GM12878 (cell line): ENCODE measurements at regions of chr20 and their contacts with region 1.

Region 1: DNA sequence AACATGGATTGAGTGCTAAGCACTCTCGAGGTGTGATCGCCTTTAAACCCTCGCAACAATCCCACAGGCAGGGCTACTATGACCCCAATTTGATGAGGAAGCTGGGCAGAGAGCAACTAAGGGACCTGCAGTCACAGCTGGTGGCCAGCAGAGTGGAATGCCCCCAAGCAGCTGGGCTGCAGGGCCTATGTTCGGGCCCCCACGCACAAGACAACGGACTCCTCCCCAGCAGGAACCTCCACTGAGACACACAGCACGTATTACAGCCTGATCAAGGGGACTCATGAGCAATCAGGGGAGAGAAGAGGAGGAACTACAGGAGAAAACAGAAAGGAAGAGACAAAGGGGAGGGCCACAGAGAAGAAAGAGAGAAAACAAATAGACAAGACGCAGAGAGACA is 21.7 kb downstream of the CST7 start:
- DNase-seq: no peak
- ATAC-seq: no peak
- H3K4me3 ChIP-seq: no peak overlapping the region
- H3K27ac ChIP-seq: no peak overlapping the region
- H3K4me1 ChIP-seq: no peaks in the 10 kb centered on the region
- H3K27me3 ChIP-seq: no peaks in the 10 kb centered on the region
- CTCF ChIP-seq: no peak
- EP300 ChIP-seq: no peak
- POLR2A ChIP-seq: no peak
- RAD21 ChIP-seq: no peak

Region 2: DNA sequence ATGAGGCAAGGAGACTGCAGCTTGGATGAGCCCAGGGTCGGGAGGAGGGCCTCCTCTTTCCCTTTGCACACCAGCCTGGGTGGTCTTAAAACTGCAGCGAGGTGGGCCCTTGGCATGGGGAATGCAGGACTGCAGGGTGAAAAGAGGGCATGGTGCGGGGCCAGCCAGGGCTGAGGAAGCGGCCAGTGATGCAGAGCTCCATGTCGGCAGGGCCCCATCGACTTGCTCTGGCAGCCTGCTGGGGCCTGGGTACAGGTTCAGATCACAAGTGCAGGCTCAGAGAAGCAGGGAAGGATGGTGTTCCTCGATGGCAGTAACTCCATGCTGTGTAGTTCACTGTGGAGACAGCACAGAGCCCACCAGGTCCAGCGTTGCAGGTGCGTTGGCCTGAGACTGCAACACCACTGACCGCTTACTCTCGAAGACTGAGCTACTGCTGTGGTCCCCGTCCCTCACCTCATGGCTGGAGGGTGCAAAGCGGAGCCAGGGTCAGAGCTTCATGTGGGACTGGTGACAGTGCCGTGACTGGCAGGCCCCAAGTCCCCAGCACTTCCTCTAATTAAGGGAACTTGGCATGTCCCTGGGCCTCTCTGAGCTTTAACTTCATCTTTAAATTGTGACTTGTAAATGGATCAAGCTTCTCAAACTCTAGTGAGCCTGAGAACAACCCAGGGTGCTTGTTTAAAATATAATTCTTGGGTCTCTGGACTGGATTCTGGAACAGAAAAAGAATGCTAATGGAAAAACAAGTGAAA is 278.1 kb before region 1 on chr20:
- CTCF ChIA-PET with region 1: no interaction called
- POLR2A ChIA-PET with region 1: no interaction called
- RAD21 ChIA-PET with region 1: no interaction called
- SMC1A ChIA-PET with region 1: no interaction called
- in situ Hi-C with region 1: no loop called
- intact Hi-C with region 1: no loop called
- DNase-seq: no peak
- ATAC-seq: no peak
- H3K4me3 ChIP-seq: no peak overlapping the region
- H3K27ac ChIP-seq: no peak overlapping the region
- H3K4me1 ChIP-seq: no peaks in the 10 kb centered on the region
- H3K27me3 ChIP-seq: peaks cover 0 to 2% of the 10 kb centered on the region in 2 experiments; a peak in 2 of 4 replicates
- CTCF ChIP-seq: no peak
- EP300 ChIP-seq: no peak
- POLR2A ChIP-seq: no peak
- RAD21 ChIP-seq: no peak

Region 3: GRCh38 chr20:24842918-24843715 is 127.6 kb before region 1 on chr20:
- CTCF ChIA-PET with region 1: no interaction called
- POLR2A ChIA-PET with region 1: no interaction called
- RAD21 ChIA-PET with region 1: no interaction called
- SMC1A ChIA-PET with region 1: no interaction called
- in situ Hi-C with region 1: no loop called
- intact Hi-C with region 1: no loop called
- DNase-seq: peak; percentile 98
- ATAC-seq: peak; percentile 95
- H3K4me3 ChIP-seq: peak overlapping the region; percentile 12
- H3K27ac ChIP-seq: peak overlapping the region; percentile 63
- H3K4me1 ChIP-seq: peaks cover 49% of the 10 kb centered on the region
- H3K27me3 ChIP-seq: no peaks in the 10 kb centered on the region
- CTCF ChIP-seq: no peak
- EP300 ChIP-seq: peak; percentile 86 to 92
- POLR2A ChIP-seq: no peak
- RAD21 ChIP-seq: no peak

Region 4: GRCh38 chr20:25022687-25023086 is 51.9 kb after region 1 on chr20:
- CTCF ChIA-PET with region 1: no interaction called
- POLR2A ChIA-PET with region 1: no interaction called
- RAD21 ChIA-PET with region 1: no interaction called
- SMC1A ChIA-PET with region 1: no interaction called
- in situ Hi-C with region 1: loop called (anchors 5 kb)
- intact Hi-C with region 1: no loop called
- DNase-seq: no peak
- ATAC-seq: no peak
- H3K4me3 ChIP-seq: no peak overlapping the region
- H3K27ac ChIP-seq: no peak overlapping the region
- H3K4me1 ChIP-seq: no peaks in the 10 kb centered on the region
- H3K27me3 ChIP-seq: no peaks in the 10 kb centered on the region
- CTCF ChIP-seq: no peak
- EP300 ChIP-seq: no peak
- POLR2A ChIP-seq: no peak
- RAD21 ChIP-seq: no peak